BJ (cell line): ENCODE measurements at regions of chr17 and their contacts with region 1.

Region 1: GRCh38 chr17:45098869-45099616 is 33.3 kb downstream of the PLCD3 start:
- DNase-seq: no peak
- H3K4me3 ChIP-seq: no peak overlapping the region
- H3K27me3 ChIP-seq: no peaks in the 10 kb centered on the region
- CTCF ChIP-seq: peak; percentile 91

Region 2: DNA sequence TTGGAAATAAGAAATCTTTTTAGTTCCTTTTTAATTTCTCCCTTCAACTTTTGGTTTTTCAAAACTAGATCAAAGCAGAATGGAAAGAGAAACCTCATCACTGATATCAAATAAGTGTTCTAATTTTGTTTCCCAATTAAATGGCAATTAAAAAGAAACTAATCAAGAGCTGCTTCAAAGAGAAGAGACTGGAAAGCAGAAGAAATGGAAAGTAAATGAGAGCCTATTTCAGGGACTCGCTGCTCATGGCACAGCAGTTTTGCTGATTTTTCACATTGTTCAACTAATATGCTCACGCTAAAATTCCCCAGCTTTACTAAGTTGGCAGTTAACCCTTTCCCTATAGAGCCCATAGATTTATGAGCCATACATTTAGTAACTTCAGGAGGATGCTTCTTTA is 31.4 kb before region 1 on chr17:
- CTCF ChIA-PET with region 1: interaction called, 10 read pairs
- POLR2A ChIA-PET with region 1: no interaction called
- DNase-seq: no peak
- H3K4me3 ChIP-seq: no peak overlapping the region
- H3K27me3 ChIP-seq: no peaks in the 10 kb centered on the region
- CTCF ChIP-seq: no peak

Region 3: GRCh38 chr17:45115871-45116724 is 17.1 kb after region 1 on chr17:
- CTCF ChIA-PET with region 1: interaction called, 19 read pairs
- POLR2A ChIA-PET with region 1: no interaction called
- DNase-seq: no peak
- H3K4me3 ChIP-seq: no peak overlapping the region
- H3K27me3 ChIP-seq: no peaks in the 10 kb centered on the region
- CTCF ChIP-seq: no peak

Region 4: GRCh38 chr17:45341533-45342158 is 242.6 kb after region 1 on chr17:
- CTCF ChIA-PET with region 1: no interaction called
- POLR2A ChIA-PET with region 1: no interaction called
- DNase-seq: peak; percentile 76
- H3K4me3 ChIP-seq: peak overlapping the region; percentile 17; the same call in 1 of the 2 replicates
- H3K27me3 ChIP-seq: no peaks in the 10 kb centered on the region
- CTCF ChIP-seq: no peak